AG04449 (cell line): ENCODE measurements at regions of chr11 and their contacts with region 1.

Region 1: GRCh38 chr11:72141066-72141465 is 5.5 kb downstream of the FOLR3 start:
- DNase-seq: peak; percentile 82
- H3K4me3 ChIP-seq: no peak overlapping the region
- CTCF ChIP-seq: no peak

Region 2: GRCh38 chr11:72030472-72031045 is 110.5 kb before region 1 on chr11:
- CTCF ChIA-PET with region 1: interaction called, 46 read pairs
- POLR2A ChIA-PET with region 1: no interaction called
- DNase-seq: no peak
- H3K4me3 ChIP-seq: no peak overlapping the region
- CTCF ChIP-seq: no peak

Region 3: GRCh38 chr11:72091005-72091691 is 49.9 kb before region 1 on chr11:
- CTCF ChIA-PET with region 1: interaction called, 22 read pairs
- POLR2A ChIA-PET with region 1: no interaction called
- DNase-seq: no peak
- H3K4me3 ChIP-seq: no peak overlapping the region
- CTCF ChIP-seq: peak; percentile 91

Region 4: GRCh38 chr11:72112321-72113219 is 28.5 kb before region 1 on chr11 and contains the start of gene ANAPC15:
- CTCF ChIA-PET with region 1: interaction called, 19 read pairs
- POLR2A ChIA-PET with region 1: interaction called, 3 read pairs
- DNase-seq: peak; percentile 99
- H3K4me3 ChIP-seq: peak within 1 kb of the TSS; percentile 87
- CTCF ChIP-seq: no peak

Region 5: DNA sequence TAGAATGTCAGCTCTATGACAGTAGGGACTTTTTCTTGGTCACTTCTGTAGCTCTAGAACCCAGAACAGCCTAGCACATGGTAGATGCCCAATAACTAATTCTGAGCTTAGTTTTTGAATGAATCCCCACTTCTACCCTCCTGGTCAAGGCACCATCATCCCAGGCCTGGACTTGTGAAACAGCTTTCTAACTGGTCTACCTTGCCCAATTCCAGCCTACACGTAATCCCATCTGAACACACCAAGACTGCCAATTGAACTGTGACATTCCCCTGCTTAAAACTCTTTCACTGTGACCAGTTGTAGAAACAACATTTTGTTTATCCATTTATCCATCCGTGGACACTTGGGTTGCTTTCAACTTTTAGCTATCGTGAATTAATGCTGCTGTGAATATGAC is 11.7 kb before region 1 on chr11:
- CTCF ChIA-PET with region 1: interaction called, 15 read pairs
- POLR2A ChIA-PET with region 1: no interaction called
- DNase-seq: no peak
- H3K4me3 ChIP-seq: no peak overlapping the region
- CTCF ChIP-seq: no peak

Region 6: DNA sequence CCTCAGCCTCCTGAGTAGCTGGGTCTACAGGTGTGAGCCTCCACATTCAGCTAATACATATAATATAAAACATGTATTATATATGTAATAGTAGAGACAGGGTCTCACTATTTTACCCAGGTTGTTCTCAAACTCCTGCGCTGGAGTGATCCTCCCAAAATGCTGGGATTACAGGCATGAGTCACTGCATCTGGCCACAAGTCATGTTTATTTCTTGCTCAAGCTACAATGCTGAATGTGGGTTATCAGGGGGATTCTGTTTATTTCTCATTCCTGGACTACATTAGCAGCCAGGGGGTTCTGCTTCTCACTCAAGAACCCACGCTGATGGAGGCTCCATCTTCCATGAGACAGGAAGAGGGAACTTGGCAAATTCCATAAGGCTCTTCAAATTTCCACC is 19.3 kb after region 1 on chr11:
- CTCF ChIA-PET with region 1: interaction called, 23 read pairs
- POLR2A ChIA-PET with region 1: no interaction called
- DNase-seq: no peak
- H3K4me3 ChIP-seq: no peak overlapping the region
- CTCF ChIP-seq: no peak

Region 7: GRCh38 chr11:72222907-72223614 is 82.0 kb after region 1 on chr11:
- CTCF ChIA-PET with region 1: interaction called, 15 read pairs
- POLR2A ChIA-PET with region 1: interaction called, 3 read pairs
- DNase-seq: no peak
- H3K4me3 ChIP-seq: peak overlapping the region; percentile 91
- CTCF ChIP-seq: peak; percentile 35

Region 8: DNA sequence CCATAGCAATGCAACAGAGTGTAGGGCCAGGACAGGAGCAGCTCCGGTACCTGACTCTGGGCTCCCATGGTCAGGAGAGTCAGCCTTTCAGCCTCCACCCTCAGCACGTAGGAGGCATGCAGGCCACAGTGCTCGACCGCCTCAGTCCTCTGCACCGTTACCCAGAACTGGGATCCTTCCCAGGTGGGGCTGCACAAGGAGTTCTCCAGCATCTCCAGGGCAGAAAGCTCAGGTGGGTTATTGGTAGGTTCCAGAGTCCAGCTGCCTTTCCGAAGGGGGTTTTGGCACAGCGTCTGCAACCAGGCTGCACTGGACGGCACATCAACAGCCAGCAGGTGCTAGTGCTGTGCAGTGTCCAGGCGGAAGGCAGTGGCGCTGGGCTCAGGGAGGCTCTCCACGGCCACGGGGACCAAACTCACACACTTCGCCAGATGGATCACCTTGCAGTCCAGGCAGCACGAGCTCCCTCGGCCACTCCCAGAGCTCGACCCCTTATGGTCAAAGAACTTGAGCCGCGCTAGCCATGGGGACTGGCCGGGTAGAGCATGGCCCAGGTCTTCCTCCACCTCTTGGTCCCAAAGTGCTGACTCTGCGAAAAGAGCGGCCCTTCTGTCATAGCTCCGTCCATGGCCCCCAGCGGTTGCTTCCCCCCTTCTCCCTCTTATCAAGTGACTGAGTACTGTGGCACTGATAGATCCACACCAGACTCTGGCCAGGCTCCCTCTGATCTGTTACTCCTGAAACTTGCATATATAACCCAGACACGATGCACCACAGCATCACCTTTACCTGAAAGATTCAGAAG is 109.8 kb after region 1 on chr11:
- CTCF ChIA-PET with region 1: no interaction called
- POLR2A ChIA-PET with region 1: no interaction called
- DNase-seq: no peak
- H3K4me3 ChIP-seq: no peak overlapping the region
- CTCF ChIP-seq: no peak

Region 9: GRCh38 chr11:72507050-72507449 is 366.0 kb after region 1 on chr11:
- CTCF ChIA-PET with region 1: no interaction called
- POLR2A ChIA-PET with region 1: no interaction called
- DNase-seq: no peak
- H3K4me3 ChIP-seq: no peak overlapping the region
- CTCF ChIP-seq: no peak